Astrocyte of the cerebellum (primary cell): ENCODE measurements at regions of chr20 and their contacts with region 1.

Region 1: GRCh38 chr20:49323622-49324238 is 45.9 kb upstream of the ZNFX1 start:
- DNase-seq: peak; percentile 64
- H3K4me3 ChIP-seq: no peak overlapping the region
- CTCF ChIP-seq: peak; percentile 56

Region 2: DNA sequence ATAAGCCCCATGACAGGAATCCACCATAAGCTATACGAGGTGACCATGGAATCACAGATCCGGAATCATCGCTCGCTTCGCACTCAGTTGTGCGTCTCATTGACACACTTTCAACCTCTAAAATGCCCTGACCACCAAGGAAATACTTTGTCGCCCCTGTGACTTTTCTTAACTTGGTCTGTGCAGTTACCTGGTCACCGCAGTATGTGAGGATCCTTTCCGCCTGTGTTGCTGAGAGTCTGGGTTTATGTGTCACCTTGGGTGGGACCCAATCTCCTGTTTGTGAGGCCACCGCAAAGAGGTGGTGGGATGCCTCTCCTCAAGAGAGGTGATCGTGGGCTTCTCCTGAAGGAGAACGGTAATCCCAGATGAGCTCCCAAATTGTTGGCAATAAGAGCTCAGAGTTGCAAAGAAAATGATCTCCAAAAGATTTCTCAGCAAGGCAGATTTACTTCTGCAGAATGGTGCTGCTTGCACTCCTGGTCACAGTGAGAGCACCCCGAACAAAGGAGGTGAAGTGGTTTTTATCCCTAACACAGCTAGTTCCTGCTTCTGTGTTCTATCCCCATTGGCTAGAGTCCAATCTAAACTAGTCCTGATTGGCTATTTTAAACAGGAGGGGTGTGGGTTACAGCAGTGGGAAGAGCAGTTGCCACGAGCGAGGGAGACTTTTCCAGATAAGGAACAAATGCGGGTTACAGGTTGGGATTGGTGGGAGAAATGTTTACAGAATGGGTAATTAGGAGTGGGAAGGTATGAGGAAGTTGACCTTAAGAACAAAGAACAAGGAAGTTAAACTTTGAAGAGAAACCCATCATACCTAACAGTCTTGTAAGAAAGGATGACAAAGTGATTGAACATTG is 36.8 kb before region 1 on chr20:
- in situ Hi-C with region 1: loop called (anchors 5 kb)
- DNase-seq: no peak
- H3K4me3 ChIP-seq: no peak overlapping the region
- CTCF ChIP-seq: no peak

Region 3: DNA sequence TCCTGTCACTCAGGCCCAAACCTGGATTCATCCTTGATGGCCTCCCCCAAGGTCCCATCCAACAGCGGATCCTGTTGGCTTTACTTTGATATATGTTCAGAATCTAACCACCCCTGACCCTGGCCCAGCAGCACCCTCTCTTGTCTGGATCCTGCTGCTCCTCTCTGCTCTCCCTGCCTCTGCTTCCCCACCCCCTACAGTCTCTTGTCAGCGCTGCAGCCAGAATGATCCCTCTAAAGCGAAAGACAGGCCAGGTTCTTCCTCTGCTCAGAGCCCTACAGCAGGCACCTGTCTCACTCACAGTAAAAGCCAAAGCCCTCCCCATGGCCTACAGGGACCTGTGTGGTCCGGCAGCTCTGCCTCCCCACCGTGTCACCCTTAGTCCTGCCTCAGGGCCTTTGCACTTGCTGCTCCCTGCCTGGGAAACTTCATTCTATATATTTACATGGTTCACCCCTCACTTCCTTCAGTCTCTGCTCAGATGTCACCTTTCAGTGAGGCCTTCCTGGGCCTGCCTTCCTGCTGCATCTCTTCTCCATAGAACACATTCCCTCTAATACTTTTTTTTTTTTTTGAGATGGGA is 196.1 kb after region 1 on chr20:
- in situ Hi-C with region 1: loop called (anchors 10 kb)
- DNase-seq: no peak
- H3K4me3 ChIP-seq: no peak overlapping the region
- CTCF ChIP-seq: no peak